A549 (cell line): ENCODE measurements at regions of chr14 and their contacts with region 1.

Region 1: DNA sequence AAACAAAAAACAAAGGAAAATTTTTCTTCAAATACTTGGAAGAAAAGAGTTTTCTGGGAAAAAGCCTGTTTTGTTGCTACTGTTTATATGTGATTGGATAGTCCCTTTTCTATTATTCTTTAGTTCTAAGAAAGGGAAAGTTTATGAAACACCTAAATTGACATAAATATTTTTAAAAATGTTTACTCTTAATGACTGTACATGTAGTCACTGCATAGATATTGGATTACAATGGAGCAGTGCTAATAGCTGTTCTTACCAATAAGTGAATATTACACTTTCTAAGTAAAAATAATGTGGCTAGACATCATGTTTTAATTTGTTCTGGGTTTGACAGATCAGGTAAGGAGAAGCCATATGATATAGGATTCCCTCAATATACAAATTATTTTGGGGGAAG is 352.7 kb upstream of the DIO2 start:
- DNase-seq: no peak
- ATAC-seq: no peak
- H3K4me3 ChIP-seq: no peak overlapping the region
- H3K27ac ChIP-seq: no peak overlapping the region
- H3K4me1 ChIP-seq: peaks cover 11% of the 10 kb centered on the region; the same call in 2 of the 3 replicates
- CTCF ChIP-seq: no peak
- EP300 ChIP-seq: no peak
- POLR2A ChIP-seq: no peak
- RAD21 ChIP-seq: no peak

Region 2: DNA sequence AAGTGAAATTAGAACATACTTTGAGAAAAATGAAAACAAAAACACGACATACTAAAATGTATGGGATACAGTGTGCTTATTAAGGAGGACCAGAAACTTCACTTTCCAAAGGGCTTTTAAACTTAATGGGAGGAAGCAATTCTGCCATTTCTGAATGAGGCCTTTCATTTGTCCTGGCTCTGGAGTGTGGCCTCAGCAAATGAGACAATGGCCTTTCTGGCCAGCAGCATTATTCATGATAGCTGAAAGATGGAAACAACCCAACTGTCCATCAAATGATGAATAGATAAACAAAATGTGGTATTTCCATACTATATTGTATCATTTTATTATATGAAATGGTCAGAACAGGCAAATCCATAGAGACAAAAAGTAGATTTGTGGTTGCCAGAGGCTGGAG is 38.9 kb after region 1 on chr14:
- CTCF ChIA-PET with region 1: no interaction called
- POLR2A ChIA-PET with region 1: no interaction called
- DNase-seq: no peak
- ATAC-seq: no peak
- H3K4me3 ChIP-seq: no peak overlapping the region
- H3K27ac ChIP-seq: no peak overlapping the region
- H3K4me1 ChIP-seq: no peaks in the 10 kb centered on the region
- CTCF ChIP-seq: no peak
- EP300 ChIP-seq: no peak
- POLR2A ChIP-seq: no peak
- RAD21 ChIP-seq: no peak

Region 3: GRCh38 chr14:80615831-80616230 is 51.8 kb after region 1 on chr14:
- CTCF ChIA-PET with region 1: no interaction called
- POLR2A ChIA-PET with region 1: interaction called, 16 read pairs
- DNase-seq: no peak
- ATAC-seq: no peak
- H3K4me3 ChIP-seq: no peak overlapping the region
- H3K27ac ChIP-seq: no peak overlapping the region
- H3K4me1 ChIP-seq: no peaks in the 10 kb centered on the region; the same call in 2 of the 3 replicates
- CTCF ChIP-seq: no peak
- EP300 ChIP-seq: no peak
- POLR2A ChIP-seq: no peak
- RAD21 ChIP-seq: no peak